CD4-positive, alpha-beta memory T cell (primary cell): ENCODE measurements at regions of chr22 and their contacts with region 1.

Region 1: DNA sequence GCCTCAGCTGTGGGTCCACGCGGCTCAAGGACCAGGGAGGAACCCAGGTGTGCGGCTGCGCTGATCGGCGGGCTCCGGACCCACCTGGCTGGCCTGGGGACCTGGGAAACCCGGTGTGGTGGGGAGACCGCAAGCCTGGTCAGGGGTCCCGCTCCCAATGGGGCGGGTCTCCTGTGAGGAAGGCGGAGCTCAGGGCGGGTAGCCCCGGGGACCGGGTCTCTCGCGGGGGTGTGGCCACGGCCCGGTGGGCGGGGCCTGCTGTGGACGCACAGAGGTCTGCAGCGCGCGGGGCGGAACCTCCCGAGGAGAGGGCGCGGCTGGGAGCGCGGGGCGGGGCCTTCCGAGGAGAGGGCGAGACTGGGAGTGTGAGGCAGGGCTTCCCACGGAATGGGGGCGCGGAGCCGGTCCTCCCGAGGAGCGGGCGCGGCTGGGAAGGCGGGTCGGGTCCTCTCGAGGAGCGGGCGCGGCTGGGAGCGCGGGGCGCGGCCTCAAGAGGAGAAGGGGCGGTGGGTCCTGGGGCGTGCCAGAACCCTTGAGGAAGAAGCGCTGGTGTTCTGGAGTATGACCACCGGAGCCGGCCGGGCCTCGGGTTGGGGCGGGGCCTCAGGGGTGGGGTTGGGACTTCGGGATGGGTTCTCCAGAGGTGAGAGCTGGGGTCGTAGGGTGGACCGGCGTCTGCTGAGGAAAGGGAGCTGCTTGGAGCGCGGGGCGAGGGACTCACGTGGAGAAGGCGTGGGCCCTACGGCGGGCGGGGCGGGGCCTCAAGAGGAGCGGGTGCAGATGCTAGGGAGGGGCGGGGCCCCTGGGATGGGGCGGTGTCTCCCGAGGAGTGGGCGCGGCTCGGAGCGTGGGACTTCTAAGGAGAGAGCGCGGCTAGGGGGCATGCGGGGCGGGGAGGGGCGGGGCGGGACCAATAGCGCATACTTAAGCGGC is 20.8 kb downstream of the DGCR6L start:
- DNase-seq: peak; percentile 88 to 93 (median 91)
- H3K4me3 ChIP-seq: peak overlapping the region in 1 of 2 donors; percentile 62
- H3K4me3 Mint-ChIP-seq: peak overlapping the region; percentile 81 to 89 (median 84)
- H3K27ac ChIP-seq: peak overlapping the region; percentile 25
- H3K27ac Mint-ChIP-seq: peak overlapping the region in 6 of 7 donors; percentile 65 to 95 (median 82)
- H3K4me1 ChIP-seq: peaks cover 6% of the 10 kb centered on the region
- H3K4me1 Mint-ChIP-seq: peaks cover 2 to 10% (median 8%) of the 10 kb centered on the region in 4 donors
- H3K27me3 ChIP-seq: no peaks in the 10 kb centered on the region
- H3K27me3 Mint-ChIP-seq: peaks cover 0 to 3% of the 10 kb centered on the region in 2 donors

Region 2: DNA sequence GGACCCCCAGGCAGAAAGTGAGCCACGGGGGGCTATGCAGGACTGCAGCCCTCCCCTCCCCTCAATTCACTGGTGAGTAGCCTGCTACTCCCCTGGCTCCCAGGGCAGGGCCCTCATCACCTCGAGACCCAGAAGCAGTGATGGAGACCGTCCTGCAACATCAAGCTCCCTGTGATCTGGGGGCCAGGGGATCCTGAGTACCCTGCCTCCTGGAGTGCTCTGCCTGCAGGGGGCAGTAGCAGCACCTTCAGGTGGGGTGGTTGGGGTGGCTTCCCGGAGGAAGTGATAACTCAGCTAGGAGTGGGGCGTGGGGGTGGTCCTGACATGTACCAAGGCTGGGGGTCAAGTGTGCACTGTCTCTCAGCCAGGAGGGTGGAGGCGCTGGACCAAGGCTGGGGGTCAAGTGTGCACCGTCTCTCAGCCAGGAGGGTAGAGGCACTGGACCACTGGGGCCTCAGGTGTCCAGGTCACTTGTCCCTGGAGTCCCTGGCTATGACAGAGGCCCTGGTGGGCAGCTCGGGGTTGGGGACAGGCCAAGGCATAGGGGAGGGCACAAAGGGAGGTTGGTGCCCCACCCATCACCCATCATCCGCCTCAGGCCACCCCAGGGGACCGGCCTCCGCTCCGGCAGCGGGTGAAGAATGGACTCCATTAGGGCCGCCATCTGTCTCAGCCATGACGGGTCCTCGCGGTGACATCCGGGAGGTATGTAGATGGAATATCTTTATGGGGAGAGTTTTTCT is 40.3 kb before region 1 on chr22:
- CTCF ChIA-PET with region 1: no interaction called
- POLR2A ChIA-PET with region 1: no interaction called
- intact Hi-C with region 1: no loop called
- DNase-seq: peak in 1 of 5 donors; percentile 41
- H3K4me3 ChIP-seq: no peak overlapping the region
- H3K4me3 Mint-ChIP-seq: no peak overlapping the region
- H3K27ac ChIP-seq: no peak overlapping the region
- H3K27ac Mint-ChIP-seq: peak overlapping the region in 1 of 7 donors; percentile 59
- H3K4me1 ChIP-seq: no peaks in the 10 kb centered on the region
- H3K4me1 Mint-ChIP-seq: peaks cover 0 to 7% (median 4%) of the 10 kb centered on the region in 4 donors
- H3K27me3 ChIP-seq: no peaks in the 10 kb centered on the region
- H3K27me3 Mint-ChIP-seq: no peaks in the 10 kb centered on the region

Region 3: GRCh38 chr22:20319745-20320658 is 20.9 kb after region 1 on chr22 and contains the start of gene DGCR6L:
- CTCF ChIA-PET with region 1: interaction called, 3 read pairs
- POLR2A ChIA-PET with region 1: interaction called, 12 read pairs
- intact Hi-C with region 1: loop called (anchors 1 kb)
- DNase-seq: peak; percentile 95 to 97 (median 96)
- H3K4me3 ChIP-seq: peak within 1 kb of the TSS; percentile 82 to 92
- H3K4me3 Mint-ChIP-seq: peak within 1 kb of the TSS; percentile 89 to 95 (median 91)
- H3K27ac ChIP-seq: peak within 1 kb of the TSS; percentile 81
- H3K27ac Mint-ChIP-seq: peak within 1 kb of the TSS; percentile 84 to 97 (median 91)
- H3K4me1 ChIP-seq: peaks cover 58% of the 10 kb centered on the region
- H3K4me1 Mint-ChIP-seq: peaks cover 35 to 70% (median 53%) of the 10 kb centered on the region in 4 donors
- H3K27me3 ChIP-seq: no peaks in the 10 kb centered on the region
- H3K27me3 Mint-ChIP-seq: no peaks in the 10 kb centered on the region
- total RNA-seq, gene DGCR6L: 39.9 to 44.6 TPM